Heart right ventricle (tissue), 16 donors: ENCODE measurements at regions of chr16 and their contacts with region 1.

Region 1: DNA sequence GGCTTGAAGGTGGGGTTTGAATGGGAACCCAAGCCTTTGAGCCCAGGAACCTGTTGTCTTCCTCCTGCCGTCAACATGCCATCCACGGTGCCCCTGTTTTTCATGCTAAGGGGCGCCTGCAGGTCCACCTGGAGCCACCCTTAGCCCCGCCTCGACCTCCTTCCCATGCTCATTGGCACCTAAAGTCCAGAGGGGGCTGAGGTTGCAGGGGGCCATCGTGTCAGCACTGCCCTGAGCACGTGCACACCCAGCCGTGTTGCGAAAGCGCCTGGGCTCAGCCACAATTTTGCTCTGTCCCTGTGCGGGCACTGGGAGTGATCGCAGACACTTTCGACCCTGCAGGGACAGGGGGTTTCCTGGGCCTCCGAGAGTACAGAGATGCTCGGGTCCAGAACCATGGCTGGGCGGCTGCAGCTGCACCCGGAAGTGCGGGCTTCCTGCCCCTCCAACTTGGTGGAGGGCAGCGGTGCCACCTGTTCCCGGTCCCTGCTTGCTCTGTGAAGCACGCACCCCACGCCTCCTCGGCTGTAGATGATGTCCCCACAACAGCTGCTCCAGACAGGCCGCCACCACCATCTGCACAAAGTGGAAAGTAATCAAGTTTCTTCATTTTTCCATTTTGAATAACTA is 454.7 kb downstream of the CDH8 start:
- DNase-seq: no peak
- ATAC-seq: no peak
- H3K4me3 ChIP-seq: no peak overlapping the region
- H3K27ac ChIP-seq: no peak overlapping the region
- H3K4me1 ChIP-seq: no peaks in the 10 kb centered on the region
- H3K27me3 ChIP-seq: no peaks in the 10 kb centered on the region
- CTCF ChIP-seq: no peak

Region 2: GRCh38 chr16:63038397-63039106 is 1457.0 kb after region 1 on chr16:
- intact Hi-C with region 1: loop called in 1 of 10 experiments (anchors 5 kb)
- DNase-seq: no peak
- ATAC-seq: no peak
- H3K4me3 ChIP-seq: no peak overlapping the region
- H3K27ac ChIP-seq: no peak overlapping the region
- H3K4me1 ChIP-seq: no peaks in the 10 kb centered on the region
- H3K27me3 ChIP-seq: no peaks in the 10 kb centered on the region
- CTCF ChIP-seq: no peak